Dendritic cell treated with granulocyte-macrophage colony-stimulating factor and Interleukin-4, amounts not matched to agents 40 ng/mL and 50 ng/mL, for 4 days (primary cell): ENCODE measurements at regions of chr1 and their contacts with region 1.

Region 1: GRCh38 chr1:196660852-196661251 is 9.0 kb downstream of the CFH start:
- H3K4me3 Mint-ChIP-seq: peak overlapping the region; percentile 32
- H3K27ac Mint-ChIP-seq: no peak overlapping the region
- H3K4me1 Mint-ChIP-seq: no peaks in the 10 kb centered on the region
- H3K27me3 Mint-ChIP-seq: no peaks in the 10 kb centered on the region

Region 2: GRCh38 chr1:196317535-196318522 is 343.0 kb before region 1 on chr1:
- intact Hi-C with region 1: loop called (anchors 2 kb)
- H3K4me3 Mint-ChIP-seq: no peak overlapping the region
- H3K27ac Mint-ChIP-seq: no peak overlapping the region
- H3K4me1 Mint-ChIP-seq: no peaks in the 10 kb centered on the region
- H3K27me3 Mint-ChIP-seq: no peaks in the 10 kb centered on the region